MCF 10A (cell line): ENCODE measurements at regions of chr20 and their contacts with region 1.

Region 1: DNA sequence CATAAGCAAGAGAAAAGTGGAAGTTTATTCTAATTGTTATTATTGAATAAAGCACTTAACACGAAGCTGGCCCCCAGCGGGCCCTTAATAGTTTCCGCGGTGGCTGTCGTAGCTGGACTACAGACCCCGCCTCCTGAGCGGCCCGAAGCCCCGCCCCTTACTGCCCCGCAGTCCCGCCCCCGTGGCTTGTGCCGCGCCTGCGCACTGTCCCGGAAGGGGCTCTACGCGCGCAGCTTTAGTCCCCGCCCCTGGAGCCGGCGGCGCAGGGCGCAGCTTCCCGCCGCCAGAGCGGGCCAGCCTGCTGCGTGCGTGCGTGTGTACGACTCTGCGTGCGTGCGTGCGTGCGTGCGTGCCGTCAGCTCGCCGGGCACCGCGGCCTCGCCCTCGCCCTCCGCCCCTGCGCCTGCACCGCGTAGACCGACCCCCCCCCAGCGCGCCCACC is at the start of gene VAPB:
- DNase-seq: peak; percentile 94
- H3K4me3 Mint-ChIP-seq: peak within 1 kb of the TSS; percentile 75
- H3K27ac Mint-ChIP-seq: peak within 1 kb of the TSS; percentile 73
- H3K4me1 Mint-ChIP-seq: peaks cover 30% of the 10 kb centered on the region
- H3K27me3 Mint-ChIP-seq: no peaks in the 10 kb centered on the region
- CTCF ChIP-seq: no peak
- total RNA-seq, gene VAPB: 60.4 and 61.2 TPM in 2 replicates

Region 2: DNA sequence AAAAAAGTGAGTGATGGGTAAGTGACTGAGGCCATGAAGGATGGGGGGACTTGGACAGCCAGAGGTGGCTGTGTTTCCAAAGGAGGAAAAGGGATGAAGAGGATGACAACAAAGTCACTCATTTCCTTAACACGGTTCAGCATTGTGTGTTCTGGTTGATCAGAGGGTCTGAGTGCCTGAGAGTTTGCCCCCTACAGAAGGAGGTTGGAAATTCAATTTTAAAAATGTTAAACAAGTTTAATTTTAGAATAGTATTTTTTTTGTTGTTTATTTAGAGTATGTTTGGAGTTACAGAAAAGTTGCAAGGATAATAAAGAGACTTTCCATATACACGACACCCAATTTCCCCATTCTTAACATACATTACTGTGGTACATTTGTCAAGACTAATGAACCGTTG is 10.2 kb before region 1 on chr20:
- CTCF ChIA-PET with region 1: interaction called, 3 read pairs
- POLR2A ChIA-PET with region 1: interaction called, 11 read pairs
- intact Hi-C with region 1: no loop called
- DNase-seq: no peak
- H3K4me3 Mint-ChIP-seq: no peak overlapping the region
- H3K27ac Mint-ChIP-seq: no peak overlapping the region
- H3K4me1 Mint-ChIP-seq: peaks cover 6% of the 10 kb centered on the region
- H3K27me3 Mint-ChIP-seq: peaks cover 27% of the 10 kb centered on the region
- CTCF ChIP-seq: no peak

Region 3: GRCh38 chr20:58407966-58408557 is 19.2 kb after region 1 on chr20:
- CTCF ChIA-PET with region 1: no interaction called
- POLR2A ChIA-PET with region 1: interaction called, 65 read pairs
- intact Hi-C with region 1: no loop called
- DNase-seq: peak; percentile 54
- H3K4me3 Mint-ChIP-seq: peak overlapping the region; percentile 56
- H3K27ac Mint-ChIP-seq: no peak overlapping the region
- H3K4me1 Mint-ChIP-seq: peaks cover 21% of the 10 kb centered on the region
- H3K27me3 Mint-ChIP-seq: no peaks in the 10 kb centered on the region
- CTCF ChIP-seq: no peak

Region 4: GRCh38 chr20:58420798-58421496 is 32.0 kb after region 1 on chr20:
- CTCF ChIA-PET with region 1: no interaction called
- POLR2A ChIA-PET with region 1: interaction called, 11 read pairs
- intact Hi-C with region 1: no loop called
- DNase-seq: peak; percentile 61
- H3K4me3 Mint-ChIP-seq: no peak overlapping the region
- H3K27ac Mint-ChIP-seq: no peak overlapping the region
- H3K4me1 Mint-ChIP-seq: peaks cover 14% of the 10 kb centered on the region
- H3K27me3 Mint-ChIP-seq: no peaks in the 10 kb centered on the region
- CTCF ChIP-seq: no peak

Region 5: GRCh38 chr20:58716644-58717510 is 328.0 kb after region 1 on chr20:
- CTCF ChIA-PET with region 1: no interaction called
- POLR2A ChIA-PET with region 1: no interaction called
- intact Hi-C with region 1: no loop called
- DNase-seq: no peak
- H3K4me3 Mint-ChIP-seq: no peak overlapping the region
- H3K27ac Mint-ChIP-seq: no peak overlapping the region
- H3K4me1 Mint-ChIP-seq: no peaks in the 10 kb centered on the region
- H3K27me3 Mint-ChIP-seq: peaks cover 16% of the 10 kb centered on the region
- CTCF ChIP-seq: no peak